Posterior vena cava (tissue), 2 donors: ENCODE measurements at regions of chr3 and their contacts with region 1.

Region 1: DNA sequence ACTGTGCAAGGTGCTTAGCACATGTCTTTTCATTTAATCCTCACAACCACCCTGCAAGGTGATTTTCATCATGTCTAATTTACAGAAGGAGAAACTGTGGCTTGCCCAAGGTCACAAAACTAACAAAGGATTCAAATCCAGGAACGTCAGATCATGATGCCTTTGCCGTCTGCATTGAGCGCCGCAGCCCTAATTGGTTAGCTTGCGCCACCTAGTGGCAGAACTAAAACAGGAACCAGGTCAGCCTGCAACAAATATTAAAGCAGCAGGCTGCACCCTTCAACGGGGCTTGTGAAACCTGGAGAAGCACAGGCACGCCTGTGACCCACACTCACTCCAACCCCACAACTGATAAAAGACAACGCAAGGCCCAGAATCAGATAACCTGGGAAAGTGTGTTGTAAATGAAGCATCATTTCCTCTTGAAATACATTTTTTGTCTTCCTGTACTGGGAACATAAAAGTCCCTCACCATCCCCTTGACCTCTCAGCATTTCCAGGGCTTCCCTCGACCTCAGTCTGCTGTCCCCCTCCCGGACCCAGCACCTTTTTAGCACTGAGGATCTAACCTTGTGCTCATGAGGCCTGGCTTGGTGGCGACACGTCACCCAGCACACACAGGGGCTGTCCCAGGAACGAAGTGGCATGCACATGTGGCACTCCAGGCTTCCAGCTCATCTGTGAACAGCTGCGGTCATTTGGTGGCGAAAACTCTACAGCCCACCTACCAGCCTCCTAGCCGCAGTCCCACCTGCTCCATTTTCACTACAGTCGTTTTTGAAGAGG is 17.3 kb downstream of the DPH3 start:
- DNase-seq: peak; percentile 90

Region 2: GRCh38 chr3:15268033-15268631 is 979.3 kb before region 1 on chr3:
- intact Hi-C with region 1: no loop called
- DNase-seq: peak; percentile 96

Region 3: DNA sequence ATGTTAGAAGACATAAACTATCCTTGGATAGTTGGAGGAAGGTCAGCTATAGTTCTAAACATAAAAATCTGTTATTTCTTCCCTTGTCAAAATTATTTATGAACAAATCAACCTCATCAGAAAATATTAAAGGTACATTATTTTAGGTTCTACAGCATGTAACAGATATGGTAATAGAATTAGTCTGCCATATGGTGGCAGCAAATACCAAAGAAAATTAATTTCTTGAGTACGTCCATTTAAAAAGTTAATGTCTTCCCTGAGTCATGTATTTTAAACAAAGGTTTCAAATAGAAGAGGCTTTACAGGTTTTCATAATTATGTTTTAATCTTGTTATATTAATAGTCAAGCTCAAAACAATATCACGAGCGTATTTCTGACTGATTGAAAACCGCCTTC is 431.8 kb before region 1 on chr3:
- intact Hi-C with region 1: loop called (anchors 10 kb)
- DNase-seq: no peak

Region 4: GRCh38 chr3:16048435-16049318 is 198.8 kb before region 1 on chr3:
- intact Hi-C with region 1: loop called (anchors 5 kb)
- DNase-seq: no peak

Region 5: GRCh38 chr3:16227566-16227965 is 19.9 kb before region 1 on chr3:
- intact Hi-C with region 1: no loop called
- DNase-seq: no peak